ENCODE measurements at regions of chr21 and their contacts with region 1.

Region 1: DNA sequence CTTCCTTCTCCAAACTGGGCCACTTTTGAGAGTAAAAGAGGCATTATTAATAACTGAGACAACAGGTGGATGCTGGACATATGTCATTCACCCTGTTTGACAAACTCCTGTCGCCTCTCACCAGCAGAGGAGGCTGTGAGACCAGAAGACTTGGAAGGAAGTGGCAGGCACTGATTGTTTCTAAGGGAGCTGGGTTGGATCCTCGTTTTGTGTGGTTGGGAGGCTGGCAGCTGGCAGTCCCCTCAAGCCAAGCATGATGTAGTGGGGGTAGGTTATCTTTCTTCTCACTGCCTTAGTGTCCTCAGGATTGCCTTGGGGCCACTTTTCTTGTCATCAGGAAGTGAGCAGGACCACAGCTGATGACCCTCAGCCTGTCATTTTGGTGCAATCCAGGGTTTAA is 86.5 kb upstream of the KCNJ15 start:
- DNase-seq: no peak
- ATAC-seq: no peak
- H3K4me3 Mint-ChIP-seq: no peak overlapping the region
- H3K27ac Mint-ChIP-seq: no peak overlapping the region
- H3K4me1 Mint-ChIP-seq: no peaks in the 10 kb centered on the region
- H3K27me3 Mint-ChIP-seq: no peaks in the 10 kb centered on the region

Region 2: GRCh38 chr21:38159355-38159754 is 10.9 kb before region 1 on chr21:
- CTCF ChIA-PET with region 1: interaction called, 15 read pairs
- POLR2A ChIA-PET with region 1: no interaction called
- DNase-seq: peak; percentile 66
- ATAC-seq: peak; percentile 51
- H3K4me3 Mint-ChIP-seq: no peak overlapping the region
- H3K27ac Mint-ChIP-seq: no peak overlapping the region
- H3K4me1 Mint-ChIP-seq: no peaks in the 10 kb centered on the region
- H3K27me3 Mint-ChIP-seq: peaks cover 10% of the 10 kb centered on the region